Activated B cell treated with CpG ODN at 0.5 μM for 24 hours (primary cell): ENCODE measurements at regions of chr20 and their contacts with region 1.

Region 1: GRCh38 chr20:4108495-4109306 is 93.3 kb upstream of the RNF24 start:
- DNase-seq: no peak
- ATAC-seq: peak; percentile 67
- H3K4me3 Mint-ChIP-seq: no peak overlapping the region
- H3K27ac Mint-ChIP-seq: no peak overlapping the region
- H3K4me1 Mint-ChIP-seq: peaks cover 6% of the 10 kb centered on the region
- H3K27me3 Mint-ChIP-seq: peaks cover 23% of the 10 kb centered on the region
- CTCF ChIP-seq: no peak

Region 2: DNA sequence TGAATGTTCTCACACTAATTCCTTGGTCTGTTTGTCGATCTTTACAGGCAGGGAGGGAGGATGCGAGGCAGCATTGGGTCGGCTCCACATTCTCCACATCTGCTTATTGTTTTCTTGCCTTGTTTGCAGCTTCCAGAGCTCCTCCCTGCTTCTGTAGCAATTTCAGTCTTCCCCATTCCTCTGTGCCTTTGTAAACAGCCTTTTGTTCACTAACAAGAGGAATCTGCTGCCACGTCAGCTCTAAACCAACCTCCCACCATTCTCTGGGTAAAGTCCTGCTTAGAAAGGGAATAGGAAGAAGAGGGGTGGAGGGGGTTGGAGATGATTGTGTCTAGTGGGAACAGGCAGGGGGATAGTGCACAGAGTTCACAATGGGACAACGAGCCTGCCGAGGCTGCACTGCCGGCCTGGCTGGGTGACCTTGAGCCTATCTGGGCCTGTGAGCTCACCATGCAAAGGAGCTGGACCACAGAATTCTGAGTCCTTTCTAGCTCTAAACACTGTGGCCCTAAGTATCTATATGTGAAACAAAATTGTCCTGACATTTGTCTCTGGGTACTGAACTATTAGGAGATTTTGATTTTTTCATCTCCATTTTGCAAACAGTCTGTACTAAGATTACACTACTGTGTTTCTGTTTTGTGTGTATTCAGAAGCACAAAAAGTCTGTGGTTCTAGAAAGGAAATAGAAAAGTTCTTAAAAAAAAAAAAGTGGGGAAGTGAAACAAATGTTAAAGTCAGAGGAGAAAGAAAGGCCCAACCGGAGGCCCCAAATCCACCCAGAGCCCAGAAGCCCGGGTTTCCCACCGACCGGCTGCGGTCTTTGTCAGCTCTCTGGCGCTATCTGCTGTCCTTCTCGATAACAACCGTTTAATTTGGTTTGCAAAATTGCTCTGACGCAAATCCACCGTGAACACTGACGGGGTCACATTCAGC is 611.6 kb after region 1 on chr20:
- CTCF ChIA-PET with region 1: no interaction called
- POLR2A ChIA-PET with region 1: no interaction called
- intact Hi-C with region 1: loop called (anchors 5 kb)
- DNase-seq: peak; percentile 64
- ATAC-seq: peak; percentile 97
- H3K4me3 Mint-ChIP-seq: peak overlapping the region; percentile 55
- H3K27ac Mint-ChIP-seq: peak overlapping the region; percentile 85
- H3K4me1 Mint-ChIP-seq: peaks cover 44% of the 10 kb centered on the region
- H3K27me3 Mint-ChIP-seq: no peaks in the 10 kb centered on the region
- CTCF ChIP-seq: peak; percentile 47